Transverse colon (tissue), 4 donors: ENCODE measurements at regions of chr17 and their contacts with region 1.

Region 1: DNA sequence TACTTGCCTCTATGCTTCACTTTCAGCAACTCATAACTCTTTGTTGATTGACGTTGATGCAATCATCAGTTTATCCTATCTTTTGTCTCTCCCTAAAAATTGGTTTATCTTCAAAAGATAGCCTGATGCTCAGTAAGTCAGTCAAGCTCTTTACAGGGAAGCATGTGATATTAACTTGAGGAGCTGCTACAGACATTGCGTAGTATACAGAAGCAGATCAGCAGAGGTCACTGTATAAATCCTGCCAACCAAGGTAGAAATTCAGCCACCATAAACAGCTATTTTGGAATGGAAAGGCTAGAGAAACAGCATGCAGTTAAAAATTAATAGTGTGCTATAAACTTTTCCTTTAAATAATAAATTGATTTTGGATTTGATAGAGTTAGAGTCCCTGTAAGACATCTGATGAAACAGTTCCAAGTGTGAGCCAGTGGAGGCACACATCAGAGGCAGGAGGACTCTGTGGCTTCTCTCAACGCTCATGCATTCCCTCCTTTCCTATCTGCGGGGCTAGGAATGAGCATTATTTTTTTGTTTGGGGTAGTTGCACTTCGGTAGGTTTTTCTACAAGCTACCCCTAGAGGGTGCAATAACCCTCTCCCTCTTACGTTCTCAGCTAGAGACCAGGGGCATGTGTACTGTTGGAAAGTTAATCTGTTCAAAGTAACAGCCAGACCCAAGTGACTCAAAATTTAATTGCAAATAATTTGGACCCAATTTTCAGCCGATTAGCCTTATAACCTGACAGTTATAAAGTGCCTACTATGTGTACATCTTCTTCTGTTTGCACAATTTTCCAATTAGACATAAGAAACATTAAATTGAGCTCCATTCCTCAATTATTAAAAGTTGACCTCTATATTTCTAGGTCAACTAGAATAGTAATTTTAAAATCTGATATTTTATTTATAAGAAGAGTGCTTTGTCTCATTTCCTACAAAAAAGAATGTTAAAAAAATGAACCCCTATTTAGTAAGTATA is 647.7 kb upstream of the SOX9 start:
- DNase-seq: no peak
- H3K4me3 ChIP-seq: no peak overlapping the region
- H3K27ac ChIP-seq: no peak overlapping the region
- H3K4me1 ChIP-seq: peaks cover 0 to 5% (median 2%) of the 10 kb centered on the region in 4 donors
- H3K27me3 ChIP-seq: no peaks in the 10 kb centered on the region
- CTCF ChIP-seq: peak; percentile 52 to 66 (median 61)
- EP300 ChIP-seq: no peak
- POLR2A ChIP-seq: no peak

Region 2: GRCh38 chr17:70636517-70637133 is 836.5 kb before region 1 on chr17:
- in situ Hi-C with region 1: loop called in 1 of 4 experiments (anchors 25 kb)
- intact Hi-C with region 1: no loop called
- DNase-seq: no peak
- H3K4me3 ChIP-seq: no peak overlapping the region
- H3K27ac ChIP-seq: no peak overlapping the region
- H3K4me1 ChIP-seq: no peaks in the 10 kb centered on the region
- H3K27me3 ChIP-seq: no peaks in the 10 kb centered on the region
- CTCF ChIP-seq: peak; percentile 78 to 91 (median 82)
- EP300 ChIP-seq: no peak
- POLR2A ChIP-seq: no peak

Region 3: DNA sequence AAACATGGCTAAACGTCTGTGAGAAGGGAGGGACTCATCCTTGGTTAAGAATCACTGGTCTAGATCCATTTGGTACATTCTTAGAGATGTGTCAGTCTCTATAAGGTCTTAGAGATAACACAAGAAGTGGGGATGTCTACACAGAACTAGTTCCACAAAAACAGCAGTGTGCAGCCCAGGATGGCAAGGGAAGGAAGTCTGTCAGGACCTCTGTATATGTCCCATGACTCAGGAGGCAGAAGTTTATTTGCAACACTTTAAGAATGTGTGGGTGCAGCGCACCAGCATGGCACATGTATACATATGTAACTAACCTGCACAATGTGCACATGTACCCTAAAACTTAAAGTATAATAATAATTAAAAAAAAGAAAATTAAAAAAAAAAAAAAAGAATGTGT is 99.2 kb after region 1 on chr17:
- in situ Hi-C with region 1: loop called in 1 of 4 experiments (anchors 25 kb)
- intact Hi-C with region 1: no loop called
- DNase-seq: no peak
- H3K4me3 ChIP-seq: no peak overlapping the region
- H3K27ac ChIP-seq: no peak overlapping the region
- H3K4me1 ChIP-seq: no peaks in the 10 kb centered on the region
- H3K27me3 ChIP-seq: no peaks in the 10 kb centered on the region
- CTCF ChIP-seq: no peak
- EP300 ChIP-seq: no peak
- POLR2A ChIP-seq: no peak